PC-3 (cell line): ENCODE measurements at regions of chr4 and their contacts with region 1.

Region 1: DNA sequence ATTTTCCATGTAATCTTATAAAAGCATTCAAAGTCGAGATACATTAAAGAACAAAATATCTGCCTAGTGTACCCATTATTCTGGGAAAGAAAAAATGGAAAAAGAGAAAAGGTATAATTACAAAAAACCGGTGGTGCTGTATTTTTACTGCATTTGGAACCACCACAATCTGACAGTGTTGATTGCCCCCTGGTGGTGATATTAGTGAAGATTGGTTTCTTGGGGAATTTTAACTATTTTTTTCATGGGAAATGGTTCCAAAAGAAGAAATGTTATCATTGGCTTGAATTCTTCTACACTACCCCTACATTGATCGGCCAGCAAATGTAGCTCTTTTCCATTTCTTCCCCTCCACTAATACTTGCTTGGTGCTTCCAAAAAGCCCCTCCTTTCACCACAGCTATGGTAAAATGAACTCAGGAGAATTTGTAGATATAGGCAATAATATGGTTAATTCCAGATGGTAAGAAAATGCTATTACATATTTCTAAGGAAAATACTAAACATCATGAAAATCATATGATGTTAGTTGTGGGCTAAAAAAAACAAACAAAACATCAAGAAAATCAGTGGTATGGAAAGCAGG is 50.0 kb downstream of the COX18 start:
- DNase-seq: peak; percentile 78
- ATAC-seq: no peak
- H3K4me3 ChIP-seq: no peak overlapping the region
- H3K27ac ChIP-seq: no peak overlapping the region
- H3K4me1 ChIP-seq: no peaks in the 10 kb centered on the region
- H3K27me3 ChIP-seq: peaks cover 11% of the 10 kb centered on the region
- CTCF ChIP-seq: peak; percentile 95

Region 2: DNA sequence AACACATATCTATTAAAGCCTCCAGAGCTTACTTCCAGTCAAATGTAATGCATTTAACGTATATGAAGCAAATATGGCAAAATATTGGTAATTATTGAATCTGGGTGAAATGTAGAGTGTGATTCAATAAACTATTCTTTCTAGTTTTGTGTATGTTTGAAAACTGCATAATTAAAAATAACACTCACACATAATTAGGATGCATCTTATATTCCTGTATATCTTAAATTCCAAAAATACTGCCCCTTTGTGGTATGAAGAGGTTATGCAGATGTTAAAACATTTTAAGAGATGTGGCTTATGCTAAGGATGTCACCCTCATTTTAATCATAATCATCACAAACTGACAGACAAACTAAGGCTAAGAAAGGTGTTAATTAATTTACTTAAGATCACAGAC is 133.0 kb before region 1 on chr4:
- CTCF ChIA-PET with region 1: interaction called, 3 read pairs
- POLR2A ChIA-PET with region 1: no interaction called
- intact Hi-C with region 1: loop called (anchors 5 kb)
- DNase-seq: peak; percentile 50
- ATAC-seq: no peak
- H3K4me3 ChIP-seq: no peak overlapping the region
- H3K27ac ChIP-seq: no peak overlapping the region
- H3K4me1 ChIP-seq: no peaks in the 10 kb centered on the region
- H3K27me3 ChIP-seq: no peaks in the 10 kb centered on the region
- CTCF ChIP-seq: peak; percentile 90

Region 3: DNA sequence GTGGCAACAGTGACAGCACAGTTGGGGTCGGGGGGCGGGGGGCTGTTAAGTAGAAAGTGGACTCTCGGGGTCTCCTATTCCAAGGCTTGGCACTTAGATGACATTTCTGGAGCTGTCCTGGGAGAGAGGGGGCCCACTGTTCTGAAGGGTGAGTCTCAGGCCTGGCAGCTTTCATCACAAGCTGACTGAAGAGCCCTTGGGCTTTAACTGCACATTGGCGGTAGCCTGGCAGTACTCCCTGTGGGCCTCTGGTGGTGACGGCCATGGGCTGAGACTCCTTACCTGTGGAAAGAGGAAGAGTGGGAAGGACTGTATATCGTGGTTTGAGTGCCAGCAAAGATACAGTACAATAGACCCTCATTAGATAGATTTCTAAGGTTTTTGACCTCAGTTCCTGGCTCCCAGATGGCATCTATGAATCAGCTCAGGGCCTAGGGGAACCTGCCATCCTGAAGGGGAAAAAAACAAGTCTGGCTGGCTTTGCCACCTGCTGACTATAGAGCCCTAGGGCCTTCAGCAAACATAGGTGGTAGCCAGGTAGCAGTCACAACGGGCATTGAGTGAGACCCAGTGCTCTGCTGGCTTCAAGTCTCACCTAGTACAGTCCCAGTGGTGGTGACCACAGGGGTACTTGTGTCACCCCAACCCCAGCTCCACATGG is 151.1 kb after region 1 on chr4:
- CTCF ChIA-PET with region 1: no interaction called
- POLR2A ChIA-PET with region 1: no interaction called
- intact Hi-C with region 1: no loop called
- DNase-seq: peak; percentile 93
- ATAC-seq: peak; percentile 86
- H3K4me3 ChIP-seq: no peak overlapping the region
- H3K27ac ChIP-seq: peak overlapping the region; percentile 44
- H3K4me1 ChIP-seq: peaks cover 13% of the 10 kb centered on the region
- H3K27me3 ChIP-seq: no peaks in the 10 kb centered on the region
- CTCF ChIP-seq: no peak